Heart left ventricle (tissue), 16 donors: ENCODE measurements at regions of chr22 and their contacts with region 1.

Region 1: DNA sequence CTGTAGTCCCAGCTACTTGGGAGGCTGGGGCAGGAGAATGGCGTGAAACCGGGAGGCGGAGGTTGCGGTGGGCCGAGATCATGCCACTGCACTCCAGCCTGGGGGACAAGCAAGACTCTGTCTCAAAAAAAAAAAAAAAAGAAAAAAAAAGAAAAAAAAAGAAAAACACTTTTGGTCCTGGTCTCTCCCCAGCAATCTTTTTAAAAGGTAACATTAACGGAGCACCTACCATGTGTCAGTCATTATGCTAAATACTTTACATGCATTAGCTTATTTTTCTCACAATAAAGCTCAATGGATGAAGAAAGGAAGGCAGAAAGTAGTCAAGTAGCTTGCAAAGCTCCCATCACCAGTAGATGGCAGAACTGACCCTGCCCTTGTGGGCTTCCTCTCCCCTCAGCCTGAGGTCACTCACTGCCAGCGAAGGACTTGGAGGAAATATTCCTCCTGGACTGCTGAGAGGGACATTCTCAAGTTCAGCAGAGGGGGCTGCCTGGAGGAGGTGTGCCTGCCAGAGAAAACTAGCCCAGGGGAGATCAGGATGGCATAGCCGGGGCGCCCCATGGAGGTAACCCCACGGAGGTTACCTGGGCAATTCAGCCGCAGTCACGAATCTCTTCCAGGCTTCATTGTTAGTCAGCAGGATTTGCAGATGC is 15.5 kb downstream of the APOL3 start:
- DNase-seq: peak in 4 of 5 donors; percentile 50 to 72 (median 68)
- ATAC-seq: peak; percentile 67 to 85 (median 84)
- H3K4me3 ChIP-seq: no peak overlapping the region
- H3K27ac ChIP-seq: peak overlapping the region in 5 of 12 donors; percentile 1 to 32 (median 4)
- H3K4me1 ChIP-seq: peaks cover 2 to 40% (median 23%) of the 10 kb centered on the region in 12 donors
- H3K27me3 ChIP-seq: no peaks in the 10 kb centered on the region
- CTCF ChIP-seq: peak; percentile 65 to 92 (median 80)
- POLR2A ChIP-seq: no peak

Region 2: DNA sequence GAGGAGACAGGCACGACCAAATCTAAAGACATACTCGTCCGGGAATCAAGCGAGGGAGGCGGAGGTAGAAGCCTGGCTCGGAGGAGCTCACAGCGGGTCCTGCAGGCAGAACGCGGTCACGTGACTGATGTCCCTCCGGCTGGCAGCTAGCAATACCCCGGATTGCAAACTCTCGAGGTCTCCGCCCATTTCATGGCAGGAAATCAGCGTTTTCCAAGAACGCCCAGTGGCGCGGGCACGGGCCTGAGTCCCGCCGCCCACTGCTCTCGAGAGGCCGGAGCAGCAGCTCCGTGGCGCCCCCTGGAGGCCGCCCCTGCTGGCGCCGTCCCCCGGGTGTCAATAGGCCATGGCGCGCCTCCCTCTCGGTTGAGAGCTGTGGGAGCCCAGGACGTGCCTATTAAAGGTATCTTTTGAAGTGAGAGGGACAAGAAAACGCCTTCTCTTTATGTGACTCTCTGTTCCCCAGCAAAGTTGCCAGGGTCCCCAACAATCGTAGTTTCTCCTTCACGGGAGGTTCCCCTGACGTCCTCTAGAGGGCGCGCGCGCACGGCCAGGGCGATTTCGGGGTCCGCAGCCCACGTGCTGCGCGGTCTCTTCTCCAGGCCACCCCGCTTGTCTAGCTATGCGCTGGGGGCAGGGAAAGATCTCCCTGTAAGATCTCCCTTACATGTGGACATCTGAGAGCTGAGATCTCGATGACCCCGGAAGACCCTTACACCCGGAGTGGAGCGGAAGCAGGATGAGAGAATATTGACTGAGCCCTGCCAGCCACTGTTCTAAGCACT is 79.0 kb before region 1 on chr22:
- intact Hi-C with region 1: no loop called
- DNase-seq: peak; percentile 88 to 94 (median 92)
- ATAC-seq: peak; percentile 92 to 94 (median 93)
- H3K4me3 ChIP-seq: peak overlapping the region; percentile 15 to 69 (median 58)
- H3K27ac ChIP-seq: peak overlapping the region; percentile 72 to 91 (median 82)
- H3K4me1 ChIP-seq: peaks cover 0 to 18% (median 6%) of the 10 kb centered on the region in 12 donors
- H3K27me3 ChIP-seq: no peaks in the 10 kb centered on the region
- CTCF ChIP-seq: peak; percentile 100
- POLR2A ChIP-seq: peak in 1 of 2 donors; percentile 32

Region 3: GRCh38 chr22:36081023-36081431 is 64.0 kb before region 1 on chr22:
- intact Hi-C with region 1: no loop called
- DNase-seq: no peak
- ATAC-seq: peak in 2 of 4 donors; percentile 26 to 28
- H3K4me3 ChIP-seq: no peak overlapping the region
- H3K27ac ChIP-seq: peak overlapping the region in 1 of 12 donors; percentile 61
- H3K4me1 ChIP-seq: peaks cover 0 to 5% (median 0%) of the 10 kb centered on the region in 12 donors
- H3K27me3 ChIP-seq: no peaks in the 10 kb centered on the region
- CTCF ChIP-seq: no peak
- POLR2A ChIP-seq: no peak

Region 4: GRCh38 chr22:36117053-36117554 is 27.9 kb before region 1 on chr22:
- intact Hi-C with region 1: no loop called
- DNase-seq: no peak
- ATAC-seq: peak in 2 of 4 donors; percentile 29 to 39
- H3K4me3 ChIP-seq: no peak overlapping the region
- H3K27ac ChIP-seq: no peak overlapping the region
- H3K4me1 ChIP-seq: peaks cover 0 to 4% (median 0%) of the 10 kb centered on the region in 12 donors
- H3K27me3 ChIP-seq: no peaks in the 10 kb centered on the region
- CTCF ChIP-seq: no peak
- POLR2A ChIP-seq: no peak

Region 5: DNA sequence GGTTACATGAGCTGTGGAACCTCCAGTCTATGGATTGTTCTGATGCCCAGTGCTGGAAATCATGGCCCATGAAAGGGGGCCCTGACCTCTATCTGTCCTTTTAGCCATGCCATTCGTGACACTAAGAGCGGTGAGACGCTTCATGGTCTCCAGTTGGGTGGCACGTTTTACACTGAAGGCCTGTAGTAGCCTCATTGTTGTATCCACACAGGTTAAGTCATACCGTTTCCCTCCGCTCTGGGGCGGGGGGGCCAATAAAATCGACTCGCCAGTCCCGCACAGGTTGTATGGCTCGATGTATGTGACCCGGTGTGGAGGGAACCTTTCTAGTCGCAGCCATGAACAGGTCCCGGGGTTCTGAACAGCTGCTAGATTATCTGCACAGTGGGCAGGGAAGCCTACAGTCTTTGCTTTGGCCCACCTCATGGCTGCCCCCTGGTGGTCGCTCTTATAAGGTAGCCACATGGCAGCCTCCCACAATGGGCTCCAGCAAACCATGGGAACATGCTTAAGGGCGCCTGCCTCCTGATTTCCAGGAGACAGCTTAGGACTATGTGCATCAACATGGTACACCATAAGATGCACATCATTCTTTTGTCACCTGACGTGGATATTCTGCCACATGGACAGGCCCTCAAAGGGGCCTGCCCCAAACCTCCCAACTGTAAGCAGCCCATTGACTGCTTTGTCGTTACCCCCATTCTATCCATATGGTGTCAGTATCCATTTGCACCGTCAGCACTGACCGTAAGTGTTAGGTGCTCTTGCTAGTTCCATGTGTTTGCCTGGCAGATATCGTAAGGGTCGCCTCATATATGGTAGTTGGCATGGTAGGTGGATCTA is 35.2 kb after region 1 on chr22:
- intact Hi-C with region 1: loop called (anchors 1 to 5 kb)
- DNase-seq: peak; percentile 81 to 92 (median 86)
- ATAC-seq: peak; percentile 79 to 96 (median 92)
- H3K4me3 ChIP-seq: no peak overlapping the region
- H3K27ac ChIP-seq: peak overlapping the region in 1 of 12 donors; percentile 3
- H3K4me1 ChIP-seq: peaks cover 0 to 19% (median 4%) of the 10 kb centered on the region in 12 donors
- H3K27me3 ChIP-seq: no peaks in the 10 kb centered on the region
- CTCF ChIP-seq: peak; percentile 80 to 97 (median 86)
- POLR2A ChIP-seq: no peak

Region 6: DNA sequence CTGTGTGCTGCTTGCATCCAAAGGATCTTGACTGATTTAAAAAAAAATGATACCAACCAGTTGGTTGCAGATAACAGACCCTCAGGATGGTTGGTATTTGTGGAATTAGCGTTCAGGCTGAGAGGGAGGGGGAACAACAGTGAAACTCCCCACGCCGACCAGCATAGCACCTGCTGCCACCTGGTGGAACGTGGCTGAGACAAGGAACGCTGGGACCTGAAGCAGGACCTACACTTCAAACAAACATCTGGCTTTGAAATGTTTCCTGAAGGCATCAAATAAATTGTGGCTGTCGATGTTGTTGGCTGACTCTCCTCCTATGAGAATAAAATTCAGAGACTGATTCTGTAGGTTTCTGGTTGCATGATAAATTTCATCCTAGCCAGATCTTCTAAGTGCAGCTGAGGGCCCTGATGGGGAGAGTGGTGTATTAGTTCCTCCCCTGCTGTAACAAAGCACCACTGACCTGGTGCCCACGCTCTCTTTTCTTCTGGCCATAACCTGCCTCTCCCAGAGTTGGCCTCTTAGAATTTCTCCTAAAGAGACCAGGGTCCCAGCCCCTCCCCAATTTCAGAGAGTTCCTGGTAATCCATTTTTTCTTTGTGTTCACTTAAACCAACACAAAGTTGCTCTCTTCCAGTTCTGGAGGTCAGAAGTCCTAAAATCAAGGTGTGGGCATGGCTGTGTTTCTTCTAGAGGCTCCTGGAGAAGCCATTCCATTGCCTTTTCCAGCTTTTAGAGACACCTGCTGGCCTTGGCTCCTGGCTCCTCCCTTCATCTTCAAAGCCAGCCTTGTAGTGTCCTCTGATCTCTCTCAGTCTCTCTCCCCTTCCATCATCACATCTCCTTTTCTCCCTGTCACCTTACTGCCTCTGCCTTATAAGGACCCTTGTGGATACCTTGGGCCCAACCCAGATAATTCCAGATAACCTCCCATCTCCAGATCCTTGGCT is 77.1 kb after region 1 on chr22:
- intact Hi-C with region 1: loop called in 6 of 10 experiments (anchors 2 to 10 kb)
- DNase-seq: peak in 3 of 5 donors; percentile 41 to 59 (median 58)
- ATAC-seq: peak; percentile 68 to 83 (median 74)
- H3K4me3 ChIP-seq: no peak overlapping the region
- H3K27ac ChIP-seq: no peak overlapping the region
- H3K4me1 ChIP-seq: peaks cover 0 to 32% (median 16%) of the 10 kb centered on the region in 12 donors
- H3K27me3 ChIP-seq: no peaks in the 10 kb centered on the region
- CTCF ChIP-seq: peak; percentile 55 to 78 (median 64)
- POLR2A ChIP-seq: no peak

Region 7: DNA sequence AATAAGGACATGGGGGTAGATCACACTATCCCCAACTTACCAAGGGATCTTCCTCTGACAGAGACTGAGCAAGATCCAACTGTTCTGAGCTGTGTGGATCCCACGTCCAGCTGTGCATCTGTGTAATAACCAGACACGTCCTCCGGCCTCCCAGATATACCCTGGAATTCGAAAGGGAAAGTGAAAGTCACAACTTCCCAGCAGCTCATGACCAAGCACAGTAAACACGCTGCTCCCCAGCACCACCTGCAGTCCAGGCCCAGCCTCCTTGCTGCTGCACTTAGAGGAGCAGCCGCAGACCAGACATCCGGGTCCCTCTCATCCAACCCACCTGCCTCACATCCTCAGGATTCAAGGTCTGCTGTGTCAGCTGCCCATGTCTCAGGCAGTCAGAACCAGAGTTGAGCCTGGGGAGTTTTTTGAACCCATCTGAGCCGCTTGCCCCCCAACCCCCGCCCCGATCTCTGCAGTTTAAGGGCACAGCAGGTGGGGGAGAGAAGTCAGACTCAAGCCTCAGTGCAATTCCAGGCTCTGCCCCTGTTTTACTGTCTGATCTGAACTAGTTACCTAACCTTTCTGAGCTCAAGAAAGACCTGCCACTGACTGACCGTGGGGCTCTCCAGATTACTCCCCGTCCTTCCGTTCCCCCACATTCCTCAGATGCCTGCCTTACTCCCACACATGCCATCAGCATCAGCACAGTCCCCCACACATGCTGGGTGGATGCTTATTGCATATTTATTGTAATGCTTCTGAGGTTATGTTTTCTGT is 94.6 kb after region 1 on chr22 and contains the start of gene APOL2:
- intact Hi-C with region 1: loop called in 2 of 10 experiments (anchors 10 kb)
- DNase-seq: peak; percentile 90 to 95 (median 92)
- ATAC-seq: peak; percentile 94 to 98 (median 96)
- H3K4me3 ChIP-seq: peak within 1 kb of the TSS; percentile 56 to 86 (median 72)
- H3K27ac ChIP-seq: peak within 1 kb of the TSS; percentile 78 to 98 (median 92)
- H3K4me1 ChIP-seq: peaks cover 14 to 64% (median 52%) of the 10 kb centered on the region in 12 donors
- H3K27me3 ChIP-seq: no peaks in the 10 kb centered on the region
- CTCF ChIP-seq: peak; percentile 50 to 88 (median 72)
- POLR2A ChIP-seq: peak; percentile 10 to 88
- total RNA-seq, gene APOL2: 26.6 to 213 (median 55.9) TPM

Region 8: GRCh38 chr22:36277482-36278291 is 132.7 kb after region 1 on chr22:
- intact Hi-C with region 1: loop called in 2 of 10 experiments (anchors 5 kb)
- DNase-seq: peak in 3 of 5 donors; percentile 57 to 62 (median 60)
- ATAC-seq: peak; percentile 38 to 80 (median 63)
- H3K4me3 ChIP-seq: peak overlapping the region in 3 of 12 donors; percentile 1 to 14 (median 13)
- H3K27ac ChIP-seq: peak overlapping the region in 2 of 12 donors; percentile 18 to 24
- H3K4me1 ChIP-seq: peaks cover 0 to 15% (median 9%) of the 10 kb centered on the region in 12 donors
- H3K27me3 ChIP-seq: no peaks in the 10 kb centered on the region
- CTCF ChIP-seq: peak; percentile 65 to 87 (median 76)
- POLR2A ChIP-seq: no peak

Region 9: GRCh38 chr22:36481393-36482168 is 336.6 kb after region 1 on chr22 and contains the start of gene TXN2:
- intact Hi-C with region 1: loop called in 4 of 10 experiments (anchors 5 to 10 kb)
- DNase-seq: peak; percentile 97 to 99 (median 98)
- ATAC-seq: peak; percentile 95 to 98 (median 96)
- H3K4me3 ChIP-seq: peak within 1 kb of the TSS; percentile 32 to 89 (median 76)
- H3K27ac ChIP-seq: peak within 1 kb of the TSS; percentile 97 to 100 (median 99)
- H3K4me1 ChIP-seq: peaks cover 0 to 28% (median 14%) of the 10 kb centered on the region in 12 donors
- H3K27me3 ChIP-seq: no peaks in the 10 kb centered on the region
- CTCF ChIP-seq: no peak
- POLR2A ChIP-seq: peak in 1 of 2 donors; percentile 69
- total RNA-seq, gene TXN2: 87.9 to 128 (median 113) TPM

Region 10: DNA sequence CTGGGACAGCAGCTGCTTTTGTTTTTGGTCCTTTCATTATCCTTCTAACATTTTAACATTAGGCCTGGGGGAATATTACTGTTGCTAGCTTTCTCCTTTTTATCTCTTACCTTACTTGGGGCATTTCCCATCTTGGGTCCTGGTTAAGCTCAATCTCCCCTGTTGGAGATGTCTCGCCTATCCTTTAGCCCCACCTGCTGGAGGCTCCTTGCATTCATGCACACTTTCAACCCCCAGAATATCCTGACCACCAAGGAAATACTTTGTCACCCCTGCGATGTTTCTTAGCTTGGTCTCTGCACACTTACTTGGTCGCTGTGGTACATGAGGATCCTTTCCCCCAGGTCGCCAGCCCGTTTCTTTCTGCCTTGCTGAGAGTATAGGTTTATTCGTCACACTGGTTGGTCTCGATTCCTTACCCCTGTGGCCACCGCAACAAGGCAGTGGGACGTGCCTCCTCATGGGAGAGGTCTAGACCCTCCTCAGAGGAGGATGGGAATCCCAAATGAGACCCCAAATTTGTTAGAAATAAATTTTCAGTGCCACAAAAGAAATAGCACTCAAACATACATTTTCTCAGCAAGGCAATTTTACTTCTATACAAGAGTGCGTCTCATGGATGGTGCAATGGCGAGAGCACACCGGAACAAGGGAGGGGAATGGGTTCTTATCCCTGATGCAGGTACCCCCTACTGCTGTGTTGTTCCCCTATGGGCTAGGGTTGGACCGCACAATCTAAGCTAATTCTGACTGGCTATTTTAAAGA is 341.8 kb after region 1 on chr22:
- intact Hi-C with region 1: loop called in 4 of 10 experiments (anchors 5 to 10 kb)
- DNase-seq: peak in 3 of 5 donors; percentile 46 to 54 (median 53)
- ATAC-seq: no peak
- H3K4me3 ChIP-seq: no peak overlapping the region
- H3K27ac ChIP-seq: no peak overlapping the region
- H3K4me1 ChIP-seq: peaks cover 0 to 10% (median 6%) of the 10 kb centered on the region in 12 donors
- H3K27me3 ChIP-seq: no peaks in the 10 kb centered on the region
- CTCF ChIP-seq: peak; percentile 52 to 78 (median 64)
- POLR2A ChIP-seq: no peak